Panc1 (cell line): ENCODE measurements at regions of chr16 and their contacts with region 1.

Region 1: GRCh38 chr16:53054670-53055485 is at the start of gene CHD9:
- DNase-seq: no peak
- ATAC-seq: peak; percentile 94
- H3K4me3 ChIP-seq: peak within 1 kb of the TSS; percentile 62 to 77
- H3K27ac ChIP-seq: peak within 1 kb of the TSS; percentile 90
- H3K4me1 ChIP-seq: peaks cover 7% of the 10 kb centered on the region; the same call in 1 of the 2 replicates
- H3K27me3 ChIP-seq: no peaks in the 10 kb centered on the region
- CTCF ChIP-seq: peak; percentile 96
- total RNA-seq, gene CHD9: 25.4 TPM

Region 2: DNA sequence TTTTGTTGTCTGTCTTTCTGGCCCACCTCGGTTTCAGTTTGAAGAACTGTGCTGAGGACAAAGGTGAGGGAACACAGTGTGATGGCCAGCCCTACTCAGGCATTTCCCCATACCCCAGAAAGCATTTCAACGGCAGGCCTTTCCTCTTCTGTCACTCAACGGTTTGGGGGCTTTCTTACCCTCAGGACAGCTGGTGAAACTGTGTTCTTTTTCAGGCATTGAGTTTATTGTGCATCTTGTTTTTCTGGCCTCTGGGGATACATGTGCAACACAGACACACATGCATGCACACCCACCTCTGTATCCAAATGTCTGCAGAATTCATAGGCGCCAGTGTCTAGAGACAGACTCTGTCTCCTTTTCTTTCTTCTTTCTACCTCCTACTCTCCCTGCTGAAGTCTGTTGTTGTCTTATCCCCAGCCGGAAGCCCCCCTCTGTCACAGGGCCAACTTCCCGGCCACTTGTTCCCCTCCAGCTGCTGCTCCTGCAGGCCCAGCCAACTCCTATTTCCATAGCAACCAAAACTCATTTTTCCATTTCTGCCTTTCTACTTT is 16.9 kb after region 1 on chr16:
- CTCF ChIA-PET with region 1: no interaction called
- POLR2A ChIA-PET with region 1: no interaction called
- in situ Hi-C with region 1: no loop called
- intact Hi-C with region 1: no loop called
- DNase-seq: no peak
- ATAC-seq: no peak
- H3K4me3 ChIP-seq: no peak overlapping the region
- H3K27ac ChIP-seq: no peak overlapping the region
- H3K4me1 ChIP-seq: no peaks in the 10 kb centered on the region
- H3K27me3 ChIP-seq: no peaks in the 10 kb centered on the region
- CTCF ChIP-seq: no peak

Region 3: GRCh38 chr16:53207810-53208752 is 153.2 kb after region 1 on chr16:
- CTCF ChIA-PET with region 1: interaction called, 5 read pairs
- POLR2A ChIA-PET with region 1: no interaction called
- in situ Hi-C with region 1: no loop called
- intact Hi-C with region 1: loop called (anchors 2 kb)
- DNase-seq: peak; percentile 50
- ATAC-seq: peak; percentile 99
- H3K4me3 ChIP-seq: peak overlapping the region; percentile 54 to 78
- H3K27ac ChIP-seq: peak overlapping the region; percentile 94
- H3K4me1 ChIP-seq: no peaks in the 10 kb centered on the region; the same call in 1 of the 2 replicates
- H3K27me3 ChIP-seq: no peaks in the 10 kb centered on the region
- CTCF ChIP-seq: peak; percentile 59; the same call in 1 of the 2 replicates

Region 4: GRCh38 chr16:53282975-53283946 is 228.4 kb after region 1 on chr16:
- CTCF ChIA-PET with region 1: no interaction called
- POLR2A ChIA-PET with region 1: no interaction called
- in situ Hi-C with region 1: no loop called
- intact Hi-C with region 1: loop called (anchors 10 kb)
- DNase-seq: peak; percentile 13
- ATAC-seq: no peak
- H3K4me3 ChIP-seq: no peak overlapping the region
- H3K27ac ChIP-seq: no peak overlapping the region
- H3K4me1 ChIP-seq: no peaks in the 10 kb centered on the region
- H3K27me3 ChIP-seq: no peaks in the 10 kb centered on the region
- CTCF ChIP-seq: peak; percentile 63; the same call in 1 of the 2 replicates